H1 (cell line): ENCODE measurements at regions of chr3 and their contacts with region 1.

Region 1: DNA sequence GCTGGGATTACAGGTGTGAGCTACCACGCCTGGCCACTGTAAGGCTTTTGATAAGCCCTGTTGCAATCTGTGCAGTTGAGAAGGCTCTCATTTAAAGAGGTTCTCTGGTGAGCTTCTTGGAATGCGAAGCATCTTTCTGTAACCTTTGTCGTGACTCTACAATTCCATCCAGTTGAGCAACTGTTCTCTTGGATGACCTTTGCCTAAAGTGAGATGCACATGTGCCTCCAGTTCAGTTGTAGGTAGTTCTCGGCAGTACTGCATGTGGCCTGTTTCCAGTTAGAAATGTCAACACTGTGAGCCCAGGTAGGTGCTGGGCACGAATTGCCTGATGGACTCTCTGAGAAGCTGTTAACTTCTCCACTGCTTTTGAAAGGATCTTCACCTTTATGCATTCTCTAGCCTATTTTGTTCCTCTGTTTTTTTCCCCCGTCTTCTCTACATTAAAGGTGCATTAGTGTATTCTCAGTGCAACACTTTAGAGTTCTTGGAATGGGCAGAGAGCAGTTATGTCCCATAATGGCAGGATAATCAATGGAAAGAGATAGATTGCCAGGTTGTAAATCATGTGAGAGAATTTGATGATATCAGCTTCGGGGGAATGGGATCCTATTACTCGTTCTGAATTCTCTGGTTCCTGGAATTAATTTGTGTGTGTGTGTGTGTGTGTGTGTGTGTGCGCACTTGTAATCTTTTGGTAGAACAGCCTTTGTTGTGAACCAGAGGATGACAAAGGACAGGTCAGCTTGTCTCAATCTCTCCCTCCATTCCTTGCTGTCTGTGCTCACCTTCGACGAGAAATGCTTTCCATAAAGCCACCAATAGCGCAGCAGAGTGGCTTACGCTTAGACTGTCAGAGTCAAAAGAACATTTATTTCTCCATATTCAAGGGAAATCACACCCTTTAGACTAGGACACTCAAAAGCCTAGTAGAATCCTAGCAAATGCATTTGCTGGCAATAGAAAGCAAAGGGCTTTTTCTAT is 51.1 kb downstream of the PTPRG start:
- DNase-seq: no peak
- H3K4me3 ChIP-seq: no peak overlapping the region
- H3K27ac ChIP-seq: no peak overlapping the region; the same call in 1 of the 2 replicates
- H3K4me1 ChIP-seq: peaks cover 0 to 11% (median 5%) of the 10 kb centered on the region in 4 experiments; a peak in 4 of 7 replicates
- H3K27me3 ChIP-seq: no peaks in the 10 kb centered on the region
- CTCF ChIP-seq: no peak
- EP300 ChIP-seq: no peak
- POLR2A ChIP-seq: no peak
- RAD21 ChIP-seq: no peak

Region 2: GRCh38 chr3:61518590-61518989 is 93.9 kb before region 1 on chr3:
- CTCF ChIA-PET with region 1: no interaction called
- POLR2A ChIA-PET with region 1: no interaction called
- DNase-seq: no peak
- H3K4me3 ChIP-seq: no peak overlapping the region
- H3K27ac ChIP-seq: no peak overlapping the region
- H3K4me1 ChIP-seq: peaks cover 0 to 5% (median 4%) of the 10 kb centered on the region in 4 experiments; a peak in 3 of 7 replicates
- H3K27me3 ChIP-seq: no peaks in the 10 kb centered on the region
- CTCF ChIP-seq: no peak
- EP300 ChIP-seq: no peak
- POLR2A ChIP-seq: no peak
- RAD21 ChIP-seq: no peak

Region 3: GRCh38 chr3:61601831-61602230 is 10.7 kb before region 1 on chr3:
- CTCF ChIA-PET with region 1: interaction called, 4 read pairs
- POLR2A ChIA-PET with region 1: interaction called, 17 read pairs
- DNase-seq: no peak
- H3K4me3 ChIP-seq: no peak overlapping the region
- H3K27ac ChIP-seq: no peak overlapping the region
- H3K4me1 ChIP-seq: peaks cover 0 to 16% (median 0%) of the 10 kb centered on the region in 4 experiments; a peak in 2 of 7 replicates
- H3K27me3 ChIP-seq: no peaks in the 10 kb centered on the region
- CTCF ChIP-seq: no peak
- EP300 ChIP-seq: no peak
- POLR2A ChIP-seq: no peak
- RAD21 ChIP-seq: no peak

Region 4: DNA sequence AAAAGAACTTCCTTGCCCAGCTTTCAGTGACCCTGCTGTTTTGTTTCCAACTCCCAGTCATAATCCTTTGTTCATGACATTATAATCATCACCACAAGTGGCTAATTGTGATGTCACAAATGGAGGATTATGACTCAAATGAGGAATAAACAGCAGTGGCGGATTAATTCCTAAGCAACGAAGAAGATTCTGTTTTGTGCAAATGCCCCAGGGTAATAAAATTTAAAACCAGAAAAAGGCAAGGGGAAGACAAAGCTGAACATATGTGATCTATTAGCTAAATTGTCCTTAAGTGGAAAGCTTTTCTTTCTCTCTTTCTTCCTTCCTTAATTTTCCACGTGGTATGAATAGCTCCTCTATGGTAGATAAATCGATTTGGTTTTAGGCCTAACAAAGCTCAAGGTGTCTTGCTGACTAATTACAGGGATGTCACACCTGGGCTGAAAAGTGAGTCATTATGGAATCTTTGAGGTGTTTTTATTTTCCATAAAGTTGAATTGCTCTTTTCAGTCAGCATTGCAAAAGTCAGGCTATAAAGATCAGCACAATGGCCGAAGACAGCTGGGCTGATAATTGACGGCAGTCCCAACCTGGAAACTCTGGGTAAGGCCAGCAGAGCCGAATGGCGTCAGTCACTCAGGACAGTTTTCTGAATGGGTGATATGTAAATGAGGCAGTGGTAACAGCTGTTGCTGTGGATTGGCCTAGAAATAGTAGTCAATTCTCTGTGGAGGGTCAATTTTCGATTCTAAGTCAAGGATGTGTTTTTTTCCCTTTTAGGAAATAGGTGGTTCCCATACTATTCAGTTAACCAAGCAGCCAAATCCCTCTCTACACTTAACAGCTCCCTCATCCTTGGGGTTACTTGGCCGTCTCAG is 70.4 kb after region 1 on chr3:
- CTCF ChIA-PET with region 1: no interaction called
- POLR2A ChIA-PET with region 1: no interaction called
- DNase-seq: no peak
- H3K4me3 ChIP-seq: no peak overlapping the region
- H3K27ac ChIP-seq: no peak overlapping the region
- H3K4me1 ChIP-seq: peaks cover 19 to 65% (median 44%) of the 10 kb centered on the region in 4 experiments
- H3K27me3 ChIP-seq: peaks cover 0 to 4% (median 0%) of the 10 kb centered on the region in 4 experiments; a peak in 1 of 7 replicates
- CTCF ChIP-seq: no peak
- EP300 ChIP-seq: no peak
- POLR2A ChIP-seq: no peak
- RAD21 ChIP-seq: no peak